Esophagus muscularis mucosa (tissue), 4 donors: ENCODE measurements at regions of chr5 and their contacts with region 1.

Region 1: DNA sequence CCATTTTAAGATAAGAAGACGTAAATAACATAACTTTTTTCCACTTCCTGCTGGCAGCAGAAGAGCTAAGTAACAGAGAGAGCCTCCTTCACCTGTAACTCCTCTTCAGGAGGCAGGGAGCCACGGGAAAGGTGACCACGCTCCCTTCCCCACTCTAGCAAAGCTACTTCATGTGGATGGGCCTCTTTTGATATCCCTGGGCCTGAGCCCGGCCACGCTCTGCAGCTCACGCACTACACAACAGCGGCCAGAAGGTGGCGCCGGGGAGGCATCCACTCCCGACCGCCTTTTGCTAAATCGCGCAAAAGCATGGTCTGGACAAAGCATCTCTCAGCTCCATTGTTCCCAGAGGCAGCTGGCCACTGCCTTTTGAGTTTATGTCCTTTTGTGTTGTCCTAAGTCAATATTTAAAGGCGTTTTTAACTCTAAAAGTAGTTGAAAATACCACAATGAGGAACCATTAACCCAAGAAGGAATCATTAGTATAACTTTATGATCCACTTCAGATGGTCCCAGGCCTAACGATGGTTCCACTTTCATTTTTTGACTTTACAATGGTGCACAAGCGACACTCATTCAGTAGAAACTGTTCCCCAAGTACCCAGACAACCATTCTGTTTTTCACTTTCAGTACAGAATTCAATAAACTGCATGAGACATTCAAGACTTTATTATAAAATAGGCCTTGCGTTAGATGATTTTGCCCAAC is 23.6 kb downstream of the CMBL start:
- DNase-seq: peak; percentile 95
- H3K4me3 ChIP-seq: no peak overlapping the region
- H3K27ac ChIP-seq: no peak overlapping the region
- H3K4me1 ChIP-seq: peaks cover 0 to 6% (median 1%) of the 10 kb centered on the region in 4 donors
- H3K27me3 ChIP-seq: no peaks in the 10 kb centered on the region
- CTCF ChIP-seq: peak; percentile 82 to 96 (median 94)
- EP300 ChIP-seq: no peak
- POLR2A ChIP-seq: no peak

Region 2: DNA sequence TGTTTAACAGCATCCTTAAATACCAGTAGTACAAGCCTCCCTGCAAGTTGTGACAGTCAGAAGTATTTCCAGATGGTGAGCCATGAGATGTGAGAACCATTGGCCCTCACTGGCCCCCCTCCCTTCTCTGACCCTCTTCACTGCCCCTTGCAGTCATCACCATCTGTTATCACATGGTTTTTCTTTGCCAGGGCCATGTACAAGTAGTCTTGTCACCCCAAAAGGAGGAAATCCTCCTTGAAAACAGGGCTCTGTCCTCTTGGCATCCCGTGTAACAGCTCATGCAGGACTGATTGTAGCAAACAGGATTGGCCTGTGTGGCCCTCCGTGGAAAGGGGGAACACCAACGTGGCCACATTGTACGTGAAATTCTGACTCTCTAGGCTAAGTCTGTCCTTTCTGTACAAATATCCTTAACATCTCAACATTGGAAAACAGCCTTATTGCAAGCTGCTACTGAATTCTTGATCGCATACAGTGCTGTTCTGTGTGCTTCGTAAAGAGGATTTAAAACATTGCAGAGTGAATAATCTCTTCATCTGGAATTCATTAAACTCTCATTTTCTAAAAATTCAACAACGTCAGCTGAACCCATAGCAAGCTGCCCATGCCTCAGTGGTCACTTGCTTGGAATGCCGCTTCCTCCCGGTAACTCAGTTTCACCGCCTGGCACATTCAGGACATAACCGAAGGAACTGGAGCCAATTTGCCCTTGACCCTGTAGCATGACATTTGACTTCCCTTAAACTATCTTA is 206.1 kb before region 1 on chr5:
- intact Hi-C with region 1: no loop called
- DNase-seq: no peak
- H3K4me3 ChIP-seq: no peak overlapping the region
- H3K27ac ChIP-seq: no peak overlapping the region
- H3K4me1 ChIP-seq: no peaks in the 10 kb centered on the region
- H3K27me3 ChIP-seq: peaks cover 0 to 11% (median 0%) of the 10 kb centered on the region in 4 donors
- CTCF ChIP-seq: no peak
- EP300 ChIP-seq: no peak
- POLR2A ChIP-seq: no peak

Region 3: DNA sequence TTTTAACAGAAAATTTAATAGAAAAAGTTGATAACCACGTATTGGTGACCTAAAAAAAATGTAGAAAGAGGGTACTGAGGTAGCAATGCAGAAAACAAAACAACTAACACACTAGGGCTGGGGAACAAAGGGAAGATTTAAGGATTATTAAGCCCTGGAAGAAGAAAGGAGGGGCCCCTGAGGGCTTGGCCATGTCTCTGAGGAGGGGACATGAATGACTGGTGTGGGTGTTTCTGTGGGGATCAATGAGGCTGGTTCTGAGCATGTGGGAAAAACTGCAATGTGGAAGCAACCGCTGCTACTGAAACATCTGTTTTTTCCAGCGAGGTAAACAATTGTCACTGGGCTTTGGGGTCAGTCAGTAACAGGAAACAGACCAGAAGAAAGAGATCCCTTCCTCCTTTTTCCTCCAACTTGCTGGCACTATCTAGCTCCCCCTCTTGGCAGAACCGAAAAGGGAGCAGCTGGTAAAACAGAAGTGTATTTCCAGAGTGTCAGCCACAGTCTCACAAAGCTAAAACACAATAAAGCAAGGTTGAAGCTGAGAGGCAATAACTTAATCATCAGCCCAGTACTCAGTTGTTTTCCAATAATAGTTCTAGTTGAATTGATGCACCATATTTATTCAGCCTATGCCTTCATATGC is 82.7 kb before region 1 on chr5:
- intact Hi-C with region 1: no loop called
- DNase-seq: no peak
- H3K4me3 ChIP-seq: no peak overlapping the region
- H3K27ac ChIP-seq: no peak overlapping the region
- H3K4me1 ChIP-seq: no peaks in the 10 kb centered on the region
- H3K27me3 ChIP-seq: no peaks in the 10 kb centered on the region
- CTCF ChIP-seq: peak in 1 of 3 experiments; percentile 4
- EP300 ChIP-seq: no peak
- POLR2A ChIP-seq: no peak

Region 4: GRCh38 chr5:10220243-10220642 is 63.8 kb before region 1 on chr5:
- intact Hi-C with region 1: no loop called
- DNase-seq: peak; percentile 86
- H3K4me3 ChIP-seq: no peak overlapping the region
- H3K27ac ChIP-seq: no peak overlapping the region
- H3K4me1 ChIP-seq: no peaks in the 10 kb centered on the region
- H3K27me3 ChIP-seq: no peaks in the 10 kb centered on the region
- CTCF ChIP-seq: no peak
- EP300 ChIP-seq: no peak
- POLR2A ChIP-seq: no peak

Region 5: DNA sequence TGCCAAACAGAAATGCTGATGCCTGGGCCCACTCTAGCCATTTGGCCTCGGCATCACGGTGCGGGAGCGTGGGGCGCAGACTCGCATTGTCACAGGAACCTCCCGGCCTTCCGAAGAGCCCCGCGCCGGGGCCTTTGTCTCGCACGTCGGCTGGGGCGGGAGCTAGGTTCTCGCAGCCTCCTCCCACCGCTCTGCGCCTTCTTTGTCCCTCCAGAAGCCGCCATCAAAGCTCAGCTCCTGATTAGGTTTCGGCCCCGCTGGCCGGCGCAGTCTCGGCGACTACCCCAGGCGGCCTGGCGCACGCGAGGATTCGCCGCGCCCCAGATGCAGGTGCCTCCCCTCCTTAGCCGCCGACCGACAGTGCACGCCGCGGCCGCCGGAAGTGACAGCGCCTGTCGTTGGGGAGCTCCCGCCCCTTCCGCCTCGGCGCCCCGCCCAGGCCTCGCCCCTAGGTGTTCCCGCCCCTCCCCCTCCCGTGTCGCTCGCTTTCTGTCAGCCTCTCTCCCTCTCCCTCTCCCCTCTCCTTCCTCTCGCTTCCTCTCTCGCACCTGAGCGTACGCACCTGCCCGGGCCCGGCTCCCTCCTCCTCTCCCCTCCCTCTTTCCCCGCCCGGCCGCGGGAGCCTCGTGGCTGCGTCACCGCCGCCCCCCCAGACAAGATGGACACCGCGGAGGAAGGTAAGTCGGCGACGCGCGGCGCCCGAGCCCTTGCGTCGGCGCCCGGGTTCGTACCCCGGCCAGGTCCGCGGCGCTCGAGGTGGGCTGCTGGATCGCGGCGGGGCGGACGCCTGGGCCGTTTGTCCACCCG is 69.4 kb after region 1 on chr5 and contains the start of gene MARCHF6:
- intact Hi-C with region 1: loop called (anchors 5 kb)
- DNase-seq: peak; percentile 98
- H3K4me3 ChIP-seq: peak within 1 kb of the TSS; percentile 83 to 97 (median 93)
- H3K27ac ChIP-seq: peak within 1 kb of the TSS; percentile 97 to 98 (median 98)
- H3K4me1 ChIP-seq: peaks cover 28 to 53% (median 46%) of the 10 kb centered on the region in 4 donors
- H3K27me3 ChIP-seq: no peaks in the 10 kb centered on the region
- CTCF ChIP-seq: no peak
- EP300 ChIP-seq: no peak
- POLR2A ChIP-seq: peak; percentile 84
- total RNA-seq, gene MARCHF6: 76.5 to 121 (median 92.9) TPM

Region 6: GRCh38 chr5:10409504-10409903 is 125.4 kb after region 1 on chr5:
- intact Hi-C with region 1: loop called (anchors 5 kb)
- DNase-seq: no peak
- H3K4me3 ChIP-seq: no peak overlapping the region
- H3K27ac ChIP-seq: no peak overlapping the region
- H3K4me1 ChIP-seq: no peaks in the 10 kb centered on the region
- H3K27me3 ChIP-seq: no peaks in the 10 kb centered on the region
- CTCF ChIP-seq: no peak
- EP300 ChIP-seq: no peak
- POLR2A ChIP-seq: no peak

Region 7: DNA sequence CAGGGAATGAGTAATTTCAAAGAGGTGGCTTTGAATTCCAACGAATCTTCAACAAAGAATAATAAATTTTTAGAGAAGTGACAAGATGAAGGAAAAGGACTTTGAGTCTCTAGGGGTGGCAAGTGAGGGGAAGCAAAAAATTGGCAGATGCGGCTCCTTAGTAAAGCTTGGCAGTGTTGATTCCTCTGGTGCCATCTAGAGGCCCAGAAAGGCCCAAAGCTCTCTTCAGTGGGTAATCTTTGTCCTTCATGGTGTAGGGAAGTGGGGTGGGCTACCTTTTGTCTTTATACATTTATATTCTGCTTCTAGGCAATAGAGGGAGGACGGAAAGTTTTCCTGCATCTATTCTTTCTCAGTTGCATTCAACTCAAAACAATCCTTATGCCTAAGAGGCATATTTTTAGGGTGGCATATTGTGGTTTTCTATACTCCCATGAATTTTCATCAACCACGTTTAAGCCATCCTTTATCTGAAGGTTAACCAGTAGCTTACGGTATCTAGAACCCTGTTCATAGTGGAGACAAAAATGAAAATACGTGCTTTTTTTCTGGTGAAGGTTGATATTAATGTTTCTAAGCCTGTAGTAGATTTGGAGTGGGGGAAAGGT is 140.1 kb after region 1 on chr5:
- intact Hi-C with region 1: loop called (anchors 5 kb)
- DNase-seq: no peak
- H3K4me3 ChIP-seq: no peak overlapping the region
- H3K27ac ChIP-seq: no peak overlapping the region
- H3K4me1 ChIP-seq: peaks cover 2 to 17% (median 13%) of the 10 kb centered on the region in 4 donors
- H3K27me3 ChIP-seq: no peaks in the 10 kb centered on the region
- CTCF ChIP-seq: peak; percentile 30 to 45 (median 33)
- EP300 ChIP-seq: no peak
- POLR2A ChIP-seq: no peak

Region 8: DNA sequence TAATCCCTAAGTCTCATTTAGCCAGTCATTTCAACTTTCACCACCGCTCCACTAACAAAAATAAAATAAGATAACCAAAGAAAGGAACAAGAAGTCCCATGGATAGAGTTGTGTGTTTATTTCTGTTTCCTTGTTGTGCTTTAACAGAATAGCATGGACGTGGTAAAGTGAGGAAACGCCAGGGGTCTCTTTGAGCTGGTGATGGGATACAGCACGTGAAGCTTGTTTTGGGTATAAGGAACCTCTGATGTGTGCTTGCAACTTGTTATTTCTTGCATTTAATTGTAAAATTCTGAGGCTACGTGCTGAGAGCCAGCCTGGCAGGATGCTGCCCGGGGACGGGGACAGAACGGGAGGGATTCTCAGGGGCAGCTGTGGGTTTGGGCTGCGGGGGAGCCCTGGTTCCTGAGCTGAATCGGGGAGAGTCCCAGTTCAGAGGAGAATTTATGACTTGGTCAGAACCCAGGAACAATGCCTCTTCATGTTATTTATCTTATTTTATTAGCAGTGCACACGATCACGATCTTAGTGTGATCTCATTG is 343.1 kb after region 1 on chr5:
- intact Hi-C with region 1: loop called (anchors 5 kb)
- DNase-seq: no peak
- H3K4me3 ChIP-seq: peak overlapping the region; percentile 34 to 47 (median 44)
- H3K27ac ChIP-seq: peak overlapping the region; percentile 49 to 78 (median 58)
- H3K4me1 ChIP-seq: peaks cover 16 to 22% (median 20%) of the 10 kb centered on the region in 4 donors
- H3K27me3 ChIP-seq: peaks cover 0 to 36% (median 0%) of the 10 kb centered on the region in 4 donors
- CTCF ChIP-seq: no peak
- EP300 ChIP-seq: no peak
- POLR2A ChIP-seq: no peak